Motor neuron (in vitro differentiated cells): ENCODE measurements at regions of chr2 and their contacts with region 1.

Region 1: GRCh38 chr2:121095257-121096080 is 189.5 kb downstream of the TFCP2L1 start:
- ATAC-seq: peak; percentile 72 to 90 (median 85)
- H3K4me3 ChIP-seq: no peak overlapping the region
- H3K27ac ChIP-seq: no peak overlapping the region
- H3K4me1 ChIP-seq: peaks cover 0 to 11% of the 10 kb centered on the region in 2 donors

Region 2: DNA sequence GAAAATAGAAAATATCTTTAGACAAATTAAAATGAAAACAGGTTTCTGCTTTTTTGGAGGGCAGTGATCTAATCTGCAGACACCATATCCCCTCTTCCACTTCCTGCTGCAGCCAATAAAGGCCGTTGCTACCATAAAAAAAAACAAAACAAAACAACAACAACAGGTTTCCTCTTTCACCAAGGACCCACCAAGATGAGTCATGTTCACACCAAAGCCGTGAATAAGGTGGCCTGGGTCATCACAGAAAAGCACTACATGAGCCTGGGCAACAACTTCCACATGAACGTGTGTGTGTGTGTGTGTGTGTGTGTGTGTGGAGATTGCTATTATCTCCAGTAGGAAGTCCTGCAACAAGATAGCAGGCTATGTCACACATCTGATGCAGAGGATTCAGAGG is 214.3 kb after region 1 on chr2:
- in situ Hi-C with region 1: loop called in 1 of 9 experiments (anchors 25 kb)
- ATAC-seq: no peak
- H3K4me3 ChIP-seq: no peak overlapping the region
- H3K27ac ChIP-seq: no peak overlapping the region
- H3K4me1 ChIP-seq: no peaks in the 10 kb centered on the region

Region 3: DNA sequence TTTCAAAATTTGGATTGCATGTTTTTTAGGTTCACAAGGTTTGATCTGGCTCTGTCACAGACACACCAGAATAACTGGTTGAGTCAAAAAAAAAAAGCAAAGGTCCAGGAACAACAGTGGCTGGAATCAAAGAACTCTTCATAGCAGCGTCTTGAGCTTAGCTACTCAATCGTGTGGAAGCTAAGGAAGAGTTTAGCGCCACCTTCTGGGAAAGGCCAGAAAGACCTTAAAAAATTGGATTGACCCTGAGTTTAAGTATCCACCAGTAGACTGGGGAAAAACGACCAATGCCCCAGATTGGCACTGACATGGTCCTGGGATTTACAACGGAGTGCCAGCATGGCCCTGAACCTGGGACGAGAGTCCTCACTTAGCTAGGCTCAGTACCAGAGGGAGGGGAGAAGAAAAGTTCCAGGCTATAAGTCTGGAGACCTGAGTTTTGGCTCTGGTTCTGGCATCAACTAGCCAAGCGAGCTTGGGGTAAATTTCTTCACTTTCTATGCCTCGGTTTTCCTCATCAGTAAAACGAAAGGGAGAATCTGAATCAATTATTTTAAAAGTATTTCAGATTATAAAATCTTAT is 260.7 kb after region 1 on chr2:
- in situ Hi-C with region 1: loop called in 2 of 9 experiments (anchors 10 to 25 kb)
- ATAC-seq: peak; percentile 56 to 89 (median 76)
- H3K4me3 ChIP-seq: no peak overlapping the region
- H3K27ac ChIP-seq: no peak overlapping the region
- H3K4me1 ChIP-seq: no peaks in the 10 kb centered on the region